ENCODE measurements at regions of chr17 and their contacts with region 1.

Region 1: GRCh38 chr17:15999439-16000350 is at the starts of genes TTC19 and ZSWIM7:
- DNase-seq: peak; percentile 83
- ATAC-seq: peak; percentile 93
- H3K4me3 ChIP-seq: peak within 1 kb of the TSS; percentile 85
- H3K27ac ChIP-seq: peak within 1 kb of the TSS; percentile 69
- H3K4me1 ChIP-seq: peaks cover 11% of the 10 kb centered on the region
- H3K27me3 ChIP-seq: no peaks in the 10 kb centered on the region
- CTCF ChIP-seq: peak in 2 of 3 experiments; percentile 9 to 11; a peak in 1 of 6 replicates
- EP300 ChIP-seq: no peak
- POLR2A ChIP-seq: peak; percentile 97
- RAD21 ChIP-seq: no peak
- polyA plus RNA-seq, gene TTC19: 8.3 to 12.3 TPM
- polyA plus RNA-seq, gene ZSWIM7: 7.2 to 9.2 TPM

Region 2: DNA sequence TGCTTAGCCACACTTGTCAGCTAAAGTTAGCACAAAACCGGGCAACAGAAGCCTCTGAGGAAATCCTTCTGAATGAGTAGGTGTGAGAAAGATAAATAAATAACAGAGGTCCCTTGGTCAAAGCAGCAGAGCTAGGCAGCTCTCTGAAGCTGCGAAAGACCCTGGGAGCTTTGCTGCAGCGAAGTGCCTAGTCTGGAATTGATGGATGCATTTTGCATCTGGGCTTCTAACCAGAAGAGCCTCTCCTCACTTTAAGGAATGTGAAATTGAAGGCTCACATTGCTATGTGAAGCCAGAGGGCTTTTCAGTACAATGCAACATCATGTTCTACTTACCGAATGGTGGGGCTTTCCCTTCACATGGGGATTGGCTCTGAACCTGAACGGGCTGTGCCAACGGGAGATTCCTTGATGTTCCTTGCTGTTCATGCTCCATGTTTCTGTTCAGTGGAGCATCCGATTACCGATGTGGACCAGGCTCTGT is 1424.2 kb before region 1 on chr17:
- CTCF ChIA-PET with region 1: no interaction called
- POLR2A ChIA-PET with region 1: no interaction called
- RAD21 ChIA-PET with region 1: no interaction called
- SMC1A ChIA-PET with region 1: no interaction called
- in situ Hi-C with region 1: no loop called
- intact Hi-C with region 1: no loop called
- DNase-seq: no peak
- ATAC-seq: no peak
- H3K4me3 ChIP-seq: no peak overlapping the region
- H3K27ac ChIP-seq: no peak overlapping the region
- H3K4me1 ChIP-seq: no peaks in the 10 kb centered on the region
- H3K27me3 ChIP-seq: no peaks in the 10 kb centered on the region
- CTCF ChIP-seq: no peak
- EP300 ChIP-seq: no peak
- POLR2A ChIP-seq: no peak
- RAD21 ChIP-seq: no peak

Region 3: GRCh38 chr17:15257258-15257788 is 742.4 kb before region 1 on chr17:
- CTCF ChIA-PET with region 1: no interaction called
- POLR2A ChIA-PET with region 1: no interaction called
- RAD21 ChIA-PET with region 1: no interaction called
- SMC1A ChIA-PET with region 1: no interaction called
- in situ Hi-C with region 1: loop called (anchors 25 kb)
- intact Hi-C with region 1: no loop called
- DNase-seq: peak; percentile 19
- ATAC-seq: peak; percentile 85
- H3K4me3 ChIP-seq: no peak overlapping the region
- H3K27ac ChIP-seq: no peak overlapping the region
- H3K4me1 ChIP-seq: no peaks in the 10 kb centered on the region
- H3K27me3 ChIP-seq: no peaks in the 10 kb centered on the region; a peak in 2 of 4 replicates
- CTCF ChIP-seq: peak; percentile 75 to 80 (median 77)
- EP300 ChIP-seq: no peak
- POLR2A ChIP-seq: no peak
- RAD21 ChIP-seq: peak; percentile 46

Region 4: GRCh38 chr17:15944759-15945529 is 54.8 kb before region 1 on chr17 and contains the start of gene ADORA2B:
- CTCF ChIA-PET with region 1: interaction called, 10 read pairs
- POLR2A ChIA-PET with region 1: no interaction called
- RAD21 ChIA-PET with region 1: interaction called, 4 read pairs
- SMC1A ChIA-PET with region 1: interaction called, 5 read pairs
- in situ Hi-C with region 1: no loop called
- intact Hi-C with region 1: loop called (anchors 1 kb)
- DNase-seq: no peak
- ATAC-seq: peak; percentile 77
- H3K4me3 ChIP-seq: peak within 1 kb of the TSS; percentile 32; the same call in 1 of the 2 replicates
- H3K27ac ChIP-seq: no peak within 1 kb of the TSS
- H3K4me1 ChIP-seq: no peaks in the 10 kb centered on the region
- H3K27me3 ChIP-seq: peaks cover 7 to 17% of the 10 kb centered on the region in 2 experiments
- CTCF ChIP-seq: peak; percentile 22 to 53 (median 49); a peak in 4 of 6 replicates
- EP300 ChIP-seq: no peak
- POLR2A ChIP-seq: no peak
- RAD21 ChIP-seq: peak; percentile 28; the same call in 1 of the 2 replicates
- polyA plus RNA-seq, gene ADORA2B: 0.13 to 0.16 TPM

Region 5: DNA sequence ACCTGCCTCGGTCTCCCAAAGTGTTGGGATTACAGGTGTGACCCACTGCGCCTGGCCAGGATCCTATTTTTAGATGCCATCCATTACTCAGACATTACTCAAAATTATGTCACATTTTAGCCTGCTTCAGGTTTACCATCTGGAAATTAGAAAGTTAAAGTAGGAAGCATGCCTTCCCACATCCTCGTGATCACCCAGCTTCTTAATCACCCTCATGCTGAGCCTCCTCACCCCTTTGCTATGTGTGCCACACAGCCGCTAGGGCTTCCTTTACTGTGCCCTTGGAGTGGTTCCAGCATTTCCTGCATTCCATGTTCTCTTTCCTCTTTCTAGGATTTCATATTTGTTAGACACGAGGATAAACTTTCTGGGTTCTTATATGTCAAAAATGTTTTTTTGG is 45.5 kb before region 1 on chr17:
- CTCF ChIA-PET with region 1: interaction called, 5 read pairs
- POLR2A ChIA-PET with region 1: no interaction called
- RAD21 ChIA-PET with region 1: no interaction called
- SMC1A ChIA-PET with region 1: interaction called, 5 read pairs
- in situ Hi-C with region 1: no loop called
- intact Hi-C with region 1: loop called (anchors 1 kb)
- DNase-seq: no peak
- ATAC-seq: no peak
- H3K4me3 ChIP-seq: no peak overlapping the region
- H3K27ac ChIP-seq: no peak overlapping the region
- H3K4me1 ChIP-seq: peaks cover 9% of the 10 kb centered on the region
- H3K27me3 ChIP-seq: peaks cover 0 to 3% of the 10 kb centered on the region in 2 experiments; a peak in 2 of 4 replicates
- CTCF ChIP-seq: no peak
- EP300 ChIP-seq: no peak
- POLR2A ChIP-seq: no peak
- RAD21 ChIP-seq: no peak

Region 6: GRCh38 chr17:16301963-16302855 is 302.5 kb after region 1 on chr17:
- CTCF ChIA-PET with region 1: no interaction called
- POLR2A ChIA-PET with region 1: no interaction called
- RAD21 ChIA-PET with region 1: no interaction called
- SMC1A ChIA-PET with region 1: no interaction called
- in situ Hi-C with region 1: no loop called
- intact Hi-C with region 1: no loop called
- DNase-seq: no peak
- ATAC-seq: no peak
- H3K4me3 ChIP-seq: no peak overlapping the region
- H3K27ac ChIP-seq: no peak overlapping the region
- H3K4me1 ChIP-seq: no peaks in the 10 kb centered on the region
- H3K27me3 ChIP-seq: no peaks in the 10 kb centered on the region
- CTCF ChIP-seq: no peak
- EP300 ChIP-seq: no peak
- POLR2A ChIP-seq: no peak
- RAD21 ChIP-seq: no peak